ENCODE measurements at regions of chr13 and their contacts with region 1.

Region 1: DNA sequence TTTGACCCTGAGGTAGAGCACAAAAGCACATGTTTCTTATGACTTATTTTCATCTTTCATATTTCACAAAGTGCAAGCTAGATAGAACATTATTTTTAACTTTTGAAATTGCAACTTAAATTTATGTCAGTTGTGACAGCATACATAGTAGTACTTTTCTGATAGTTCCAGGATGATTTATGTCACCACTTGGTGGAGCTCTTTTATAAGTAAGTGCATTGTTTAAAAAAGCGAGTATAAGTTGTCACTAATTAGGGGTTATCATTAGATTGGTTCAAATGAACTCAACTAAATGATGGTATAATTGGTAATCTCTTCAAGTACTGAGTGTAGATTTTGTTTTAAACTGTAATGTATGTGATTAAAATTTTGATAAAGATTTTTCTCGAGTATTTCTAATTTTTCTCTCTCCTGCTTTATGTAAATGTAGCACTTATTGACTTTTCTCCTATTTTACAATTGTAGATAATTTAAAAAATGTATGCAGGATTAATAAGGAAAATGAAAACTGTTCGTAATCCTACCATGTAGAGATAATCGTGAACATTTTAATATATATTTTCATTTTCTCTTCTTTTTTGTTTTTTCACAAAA is 31.1 kb downstream of the RB1 start:
- DNase-seq: peak; percentile 24
- ATAC-seq: peak; percentile 86
- H3K4me3 ChIP-seq: no peak overlapping the region
- H3K27ac ChIP-seq: no peak overlapping the region
- H3K4me1 ChIP-seq: no peaks in the 10 kb centered on the region; the same call in 1 of the 2 replicates
- H3K27me3 ChIP-seq: no peaks in the 10 kb centered on the region
- CTCF ChIP-seq: peak; percentile 44 to 60 (median 50); a peak in 5 of 6 replicates
- EP300 ChIP-seq: no peak
- POLR2A ChIP-seq: no peak
- RAD21 ChIP-seq: peak; percentile 92

Region 2: DNA sequence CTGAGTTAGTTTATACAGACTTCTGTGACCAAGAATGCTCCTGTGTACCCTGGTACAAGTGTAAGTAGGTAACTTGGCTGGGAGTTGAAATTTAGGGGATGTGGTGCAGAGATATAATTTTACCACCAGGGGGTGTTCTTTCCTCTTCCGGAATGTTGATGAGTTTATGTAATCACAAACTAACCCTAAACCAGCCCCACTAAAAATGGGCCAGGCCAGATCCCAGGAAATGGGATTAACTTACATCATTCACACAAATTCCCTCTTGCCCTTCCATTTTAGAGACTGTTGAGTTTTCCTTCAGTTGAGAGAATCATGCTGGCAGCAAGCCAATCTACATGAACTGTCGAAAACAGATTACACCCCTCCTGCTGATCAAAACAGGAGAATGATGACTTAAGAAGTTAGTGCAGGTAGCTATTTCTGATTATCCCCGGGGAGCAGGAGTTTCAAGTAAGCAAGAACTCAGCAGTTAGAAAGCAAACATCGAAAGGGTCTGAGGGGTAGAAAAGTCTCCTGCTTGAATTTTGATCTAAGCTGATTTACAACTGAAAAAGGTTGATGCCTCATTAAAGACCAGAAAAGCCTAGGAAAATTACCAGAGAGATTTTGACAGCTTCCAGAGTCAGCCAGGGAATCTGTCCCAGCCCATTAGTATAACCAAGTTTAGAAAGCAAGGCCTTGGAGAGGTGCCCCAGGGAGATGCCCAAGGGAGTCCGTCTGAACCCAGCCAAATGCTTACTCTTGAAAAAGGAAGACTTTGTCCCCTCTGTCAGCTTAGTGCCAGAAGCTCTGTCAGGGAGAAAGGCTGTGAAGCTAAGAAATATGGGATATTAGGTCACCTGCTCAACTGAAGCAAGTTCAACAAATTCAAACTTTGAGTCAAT is 207.4 kb before region 1 on chr13:
- CTCF ChIA-PET with region 1: interaction called, 11 read pairs
- POLR2A ChIA-PET with region 1: no interaction called
- RAD21 ChIA-PET with region 1: interaction called, 10 read pairs
- SMC1A ChIA-PET with region 1: interaction called, 5 read pairs
- in situ Hi-C with region 1: no loop called
- intact Hi-C with region 1: loop called (anchors 10 kb)
- DNase-seq: peak; percentile 47
- ATAC-seq: peak; percentile 93
- H3K4me3 ChIP-seq: no peak overlapping the region
- H3K27ac ChIP-seq: no peak overlapping the region
- H3K4me1 ChIP-seq: no peaks in the 10 kb centered on the region
- H3K27me3 ChIP-seq: peaks cover 0 to 2% of the 10 kb centered on the region in 2 experiments; a peak in 2 of 4 replicates
- CTCF ChIP-seq: peak; percentile 58 to 72 (median 65)
- EP300 ChIP-seq: no peak
- POLR2A ChIP-seq: no peak
- RAD21 ChIP-seq: peak; percentile 69

Region 3: DNA sequence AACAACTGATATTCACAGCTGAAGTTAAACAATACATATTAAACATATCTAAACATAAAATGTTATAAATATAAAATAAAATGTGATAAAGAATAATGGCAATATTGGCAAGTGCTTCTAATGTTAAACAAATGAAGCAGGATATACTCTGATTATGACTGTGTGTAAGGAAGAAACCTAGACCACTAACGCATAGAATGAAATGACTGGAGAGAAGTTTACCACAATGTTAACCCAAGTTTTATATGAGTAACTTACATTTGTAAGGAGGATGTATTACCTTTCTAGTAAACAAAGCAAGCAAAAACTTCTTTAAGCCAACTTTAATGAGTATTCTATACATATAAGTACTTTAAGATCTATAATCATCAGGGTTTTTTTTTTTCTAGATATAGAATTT is 12.0 kb after region 1 on chr13:
- CTCF ChIA-PET with region 1: interaction called, 11 read pairs
- POLR2A ChIA-PET with region 1: no interaction called
- RAD21 ChIA-PET with region 1: interaction called, 3 read pairs
- SMC1A ChIA-PET with region 1: interaction called, 6 read pairs
- in situ Hi-C with region 1: no loop called
- intact Hi-C with region 1: no loop called
- DNase-seq: no peak
- ATAC-seq: no peak
- H3K4me3 ChIP-seq: no peak overlapping the region
- H3K27ac ChIP-seq: no peak overlapping the region
- H3K4me1 ChIP-seq: no peaks in the 10 kb centered on the region
- H3K27me3 ChIP-seq: no peaks in the 10 kb centered on the region
- CTCF ChIP-seq: no peak
- EP300 ChIP-seq: no peak
- POLR2A ChIP-seq: no peak
- RAD21 ChIP-seq: no peak

Region 4: DNA sequence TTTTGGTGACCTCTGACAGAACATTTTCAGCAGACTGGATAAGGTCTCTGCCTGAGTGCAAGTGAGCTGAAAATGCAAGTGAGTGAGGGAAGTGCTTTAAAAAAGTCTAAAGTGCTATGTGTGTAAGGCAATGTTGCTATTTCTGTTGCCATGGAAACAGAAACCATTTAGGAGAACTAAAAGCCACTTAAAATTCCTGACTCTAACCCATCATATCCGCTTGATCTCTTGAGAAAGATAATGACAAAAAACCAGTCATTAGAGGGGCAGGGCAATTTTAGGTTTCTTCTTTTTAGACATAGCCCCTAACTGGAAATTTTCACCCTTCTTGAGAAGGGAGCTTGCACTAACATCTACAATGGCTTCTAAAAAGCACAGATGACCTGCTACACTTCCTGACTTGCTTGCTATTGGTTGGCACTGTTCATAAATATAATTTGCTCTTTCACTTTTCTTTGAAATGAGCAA is 318.9 kb after region 1 on chr13 and contains the start of gene CYSLTR2:
- CTCF ChIA-PET with region 1: interaction called, 5 read pairs
- POLR2A ChIA-PET with region 1: no interaction called
- RAD21 ChIA-PET with region 1: no interaction called
- SMC1A ChIA-PET with region 1: no interaction called
- in situ Hi-C with region 1: no loop called
- intact Hi-C with region 1: loop called (anchors 5 kb)
- DNase-seq: peak; percentile 35
- ATAC-seq: peak; percentile 48; the same call in 2 of the 3 replicates
- H3K4me3 ChIP-seq: peak within 1 kb of the TSS; percentile 14; the same call in 1 of the 2 replicates
- H3K27ac ChIP-seq: no peak within 1 kb of the TSS
- H3K4me1 ChIP-seq: peaks cover 4% of the 10 kb centered on the region; the same call in 1 of the 2 replicates
- H3K27me3 ChIP-seq: no peaks in the 10 kb centered on the region
- CTCF ChIP-seq: no peak
- EP300 ChIP-seq: no peak
- POLR2A ChIP-seq: no peak
- RAD21 ChIP-seq: no peak
- polyA plus RNA-seq, gene CYSLTR2: 0.02 TPM in 1 of 2 experiments, not detected in the other

Region 5: DNA sequence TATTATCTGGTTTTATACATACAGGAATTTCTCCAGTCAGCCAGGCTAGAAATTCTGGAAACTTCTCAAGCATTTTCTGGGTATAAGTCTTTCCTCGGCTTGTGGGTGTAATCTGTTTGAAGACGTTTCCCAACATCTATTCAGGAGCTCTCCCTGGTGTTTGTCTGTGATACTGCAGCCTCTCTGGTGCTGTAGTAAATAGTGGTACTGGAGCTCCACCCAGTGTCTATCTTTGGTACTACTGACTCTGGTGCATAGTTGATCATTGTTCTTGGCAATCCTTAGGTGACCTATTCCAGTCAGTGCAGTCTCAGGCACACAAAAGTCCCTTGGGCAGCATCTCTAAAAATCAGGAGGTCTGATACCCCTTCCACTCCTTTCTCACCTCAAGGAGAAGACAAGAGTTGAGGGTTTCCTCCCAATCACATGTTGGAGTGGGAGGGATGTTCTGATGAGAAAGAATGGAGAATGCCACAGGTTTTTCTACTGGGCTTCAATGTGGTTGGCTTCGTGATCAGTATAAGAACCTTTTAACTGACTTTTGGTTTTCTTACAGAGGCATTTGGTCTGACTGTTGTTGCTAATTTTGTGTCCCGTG is 434.6 kb after region 1 on chr13:
- CTCF ChIA-PET with region 1: interaction called, 22 read pairs
- POLR2A ChIA-PET with region 1: no interaction called
- RAD21 ChIA-PET with region 1: interaction called, 13 read pairs
- SMC1A ChIA-PET with region 1: interaction called, 14 read pairs
- in situ Hi-C with region 1: loop called (anchors 10 kb)
- intact Hi-C with region 1: loop called (anchors 1 kb)
- DNase-seq: peak; percentile 68
- ATAC-seq: peak; percentile 98
- H3K4me3 ChIP-seq: no peak overlapping the region
- H3K27ac ChIP-seq: no peak overlapping the region
- H3K4me1 ChIP-seq: no peaks in the 10 kb centered on the region
- H3K27me3 ChIP-seq: no peaks in the 10 kb centered on the region; a peak in 1 of 4 replicates
- CTCF ChIP-seq: peak; percentile 97 to 100 (median 99); a peak in 5 of 6 replicates
- EP300 ChIP-seq: no peak
- POLR2A ChIP-seq: no peak
- RAD21 ChIP-seq: peak; percentile 100

Region 6: DNA sequence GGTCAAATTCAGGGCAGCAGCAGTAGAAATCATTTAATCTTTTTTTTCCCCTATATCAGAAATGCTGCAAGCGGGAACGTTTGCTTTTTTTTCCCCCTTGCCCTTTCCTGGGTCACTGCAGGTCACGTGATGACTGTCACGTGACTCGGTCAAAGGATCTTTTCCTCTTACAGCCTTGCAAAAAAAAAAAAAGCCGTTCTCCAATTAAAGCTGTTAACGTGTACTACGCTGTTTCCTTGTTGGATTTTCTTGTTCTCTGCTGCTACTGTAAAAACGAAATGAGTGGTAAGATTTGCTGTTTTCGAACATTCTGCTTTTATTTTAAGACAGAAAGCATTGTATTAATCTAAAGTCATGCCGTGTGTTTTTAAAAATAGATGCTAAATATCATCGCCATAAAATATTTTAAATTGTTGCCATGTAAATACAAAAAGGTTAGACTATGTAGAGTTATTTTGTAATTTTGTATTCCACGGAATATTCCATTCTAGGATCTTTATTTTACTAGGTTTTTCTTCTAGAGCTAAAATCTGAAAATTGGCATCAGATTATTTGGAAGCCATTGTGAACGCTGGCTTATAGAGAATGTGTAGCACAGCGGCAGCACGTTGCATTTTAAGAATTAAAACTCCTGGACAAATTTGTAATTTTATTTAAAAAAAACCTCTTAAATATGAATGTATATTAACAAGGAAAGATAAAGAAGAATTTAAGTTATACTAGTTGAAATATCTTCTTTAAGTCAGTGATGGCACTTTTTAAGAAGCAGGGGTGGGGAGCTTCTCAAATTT is 775.7 kb after region 1 on chr13:
- CTCF ChIA-PET with region 1: no interaction called
- POLR2A ChIA-PET with region 1: no interaction called
- RAD21 ChIA-PET with region 1: no interaction called
- SMC1A ChIA-PET with region 1: no interaction called
- in situ Hi-C with region 1: no loop called
- intact Hi-C with region 1: no loop called
- DNase-seq: peak; percentile 66
- ATAC-seq: peak; percentile 83
- H3K4me3 ChIP-seq: peak overlapping the region; percentile 57
- H3K27ac ChIP-seq: peak overlapping the region; percentile 61
- H3K4me1 ChIP-seq: no peaks in the 10 kb centered on the region
- H3K27me3 ChIP-seq: no peaks in the 10 kb centered on the region
- CTCF ChIP-seq: no peak
- EP300 ChIP-seq: no peak
- POLR2A ChIP-seq: no peak
- RAD21 ChIP-seq: no peak

Region 7: GRCh38 chr13:49308089-49308875 is 973.7 kb after region 1 on chr13:
- CTCF ChIA-PET with region 1: no interaction called
- POLR2A ChIA-PET with region 1: no interaction called
- RAD21 ChIA-PET with region 1: no interaction called
- SMC1A ChIA-PET with region 1: no interaction called
- in situ Hi-C with region 1: no loop called
- intact Hi-C with region 1: no loop called
- DNase-seq: no peak
- ATAC-seq: no peak
- H3K4me3 ChIP-seq: no peak overlapping the region
- H3K27ac ChIP-seq: no peak overlapping the region
- H3K4me1 ChIP-seq: no peaks in the 10 kb centered on the region
- H3K27me3 ChIP-seq: no peaks in the 10 kb centered on the region
- CTCF ChIP-seq: no peak
- EP300 ChIP-seq: no peak
- POLR2A ChIP-seq: no peak
- RAD21 ChIP-seq: no peak